PC-3 (cell line): ENCODE measurements at regions of chr10 and their contacts with region 1.

Region 1: DNA sequence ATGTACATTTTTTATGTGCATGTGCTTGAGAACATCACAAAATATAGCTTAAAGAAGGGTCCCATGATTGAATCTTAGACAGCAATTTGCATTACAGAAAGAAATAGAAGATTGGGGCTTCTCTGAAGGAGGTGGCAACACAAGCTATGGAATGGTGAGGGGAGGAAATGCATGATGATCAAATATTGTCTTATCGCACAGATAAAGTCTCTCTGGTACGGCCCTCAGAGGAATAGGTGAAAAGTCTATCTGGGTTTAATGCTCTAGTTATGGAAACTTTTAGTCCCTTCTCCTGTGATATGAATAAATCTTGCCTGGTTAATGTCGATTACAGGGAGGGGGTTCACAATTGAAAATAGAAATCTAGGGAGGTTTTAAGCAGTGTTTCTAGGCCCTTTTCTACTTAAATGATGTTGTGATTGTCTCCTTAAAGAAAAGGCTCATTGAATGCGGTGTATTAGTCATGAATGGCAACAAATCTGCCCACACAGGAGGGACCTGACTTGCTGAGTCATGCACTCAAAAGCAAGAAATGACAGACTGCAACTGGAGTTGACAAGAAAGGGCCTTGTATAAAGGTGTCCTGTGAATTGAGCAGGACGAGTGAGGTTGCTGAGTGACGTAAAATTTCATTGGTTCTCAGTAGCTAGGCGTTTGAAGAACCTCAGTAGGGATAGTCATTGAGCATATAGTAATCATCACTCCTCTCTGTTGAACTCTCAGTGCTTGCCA is 133.4 kb upstream of the CSTF2T start:
- DNase-seq: peak; percentile 100
- ATAC-seq: peak; percentile 100
- H3K4me3 ChIP-seq: no peak overlapping the region
- H3K27ac ChIP-seq: peak overlapping the region; percentile 85
- H3K4me1 ChIP-seq: peaks cover 14% of the 10 kb centered on the region
- H3K27me3 ChIP-seq: no peaks in the 10 kb centered on the region
- CTCF ChIP-seq: no peak

Region 2: GRCh38 chr10:51653025-51653424 is 179.8 kb before region 1 on chr10:
- CTCF ChIA-PET with region 1: no interaction called
- POLR2A ChIA-PET with region 1: no interaction called
- intact Hi-C with region 1: no loop called
- DNase-seq: no peak
- ATAC-seq: no peak
- H3K4me3 ChIP-seq: no peak overlapping the region
- H3K27ac ChIP-seq: no peak overlapping the region
- H3K4me1 ChIP-seq: peaks cover 13% of the 10 kb centered on the region
- H3K27me3 ChIP-seq: no peaks in the 10 kb centered on the region
- CTCF ChIP-seq: no peak

Region 3: GRCh38 chr10:51667678-51668335 is 165.0 kb before region 1 on chr10:
- CTCF ChIA-PET with region 1: no interaction called
- POLR2A ChIA-PET with region 1: no interaction called
- intact Hi-C with region 1: no loop called
- DNase-seq: peak; percentile 91
- ATAC-seq: peak; percentile 99
- H3K4me3 ChIP-seq: no peak overlapping the region
- H3K27ac ChIP-seq: no peak overlapping the region
- H3K4me1 ChIP-seq: peaks cover 13% of the 10 kb centered on the region
- H3K27me3 ChIP-seq: no peaks in the 10 kb centered on the region
- CTCF ChIP-seq: no peak

Region 4: DNA sequence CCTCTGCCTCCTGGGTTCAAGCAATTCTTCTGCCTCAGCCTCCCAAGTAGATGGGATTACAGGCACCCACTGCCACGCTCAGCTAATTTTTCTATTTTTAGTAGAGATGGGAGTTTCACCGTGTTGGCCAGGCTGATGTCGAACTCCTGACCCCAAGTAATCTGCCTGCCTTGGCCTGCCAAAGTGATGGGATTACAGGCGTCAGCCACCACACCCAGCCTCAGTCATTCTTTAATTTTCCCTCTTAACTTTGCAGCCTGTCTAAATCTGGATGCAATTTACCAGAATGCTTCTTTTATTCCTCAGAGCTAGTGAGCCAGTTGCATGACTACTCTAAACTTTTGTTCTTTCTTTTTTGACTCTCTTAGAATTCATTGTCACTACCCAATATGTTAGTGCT is 42.9 kb before region 1 on chr10:
- CTCF ChIA-PET with region 1: no interaction called
- POLR2A ChIA-PET with region 1: no interaction called
- intact Hi-C with region 1: no loop called
- DNase-seq: no peak
- ATAC-seq: no peak
- H3K4me3 ChIP-seq: no peak overlapping the region
- H3K27ac ChIP-seq: no peak overlapping the region
- H3K4me1 ChIP-seq: no peaks in the 10 kb centered on the region
- H3K27me3 ChIP-seq: no peaks in the 10 kb centered on the region
- CTCF ChIP-seq: no peak

Region 5: DNA sequence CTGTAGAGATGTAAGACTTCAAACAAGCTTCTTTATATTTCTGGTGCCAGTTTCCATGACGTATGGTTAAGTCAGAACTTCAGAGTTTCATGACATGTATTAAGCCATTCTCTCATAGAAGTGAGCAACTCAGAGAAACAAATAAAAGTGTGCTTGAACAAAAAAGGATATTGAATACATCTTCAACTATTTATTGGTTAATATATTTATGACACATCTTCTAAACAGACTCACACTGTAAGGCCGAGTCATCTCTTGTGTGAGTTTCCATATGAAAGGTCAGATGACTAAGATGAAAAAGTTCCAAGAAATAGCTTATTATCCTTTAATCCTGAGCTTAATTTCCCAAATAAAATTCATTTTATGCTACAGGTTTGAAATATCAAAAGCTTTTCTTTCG is 28.0 kb before region 1 on chr10:
- CTCF ChIA-PET with region 1: no interaction called
- POLR2A ChIA-PET with region 1: no interaction called
- intact Hi-C with region 1: loop called (anchors 1 kb)
- DNase-seq: peak; percentile 96
- ATAC-seq: peak; percentile 89
- H3K4me3 ChIP-seq: no peak overlapping the region
- H3K27ac ChIP-seq: peak overlapping the region; percentile 79
- H3K4me1 ChIP-seq: peaks cover 31% of the 10 kb centered on the region
- H3K27me3 ChIP-seq: no peaks in the 10 kb centered on the region
- CTCF ChIP-seq: no peak

Region 6: DNA sequence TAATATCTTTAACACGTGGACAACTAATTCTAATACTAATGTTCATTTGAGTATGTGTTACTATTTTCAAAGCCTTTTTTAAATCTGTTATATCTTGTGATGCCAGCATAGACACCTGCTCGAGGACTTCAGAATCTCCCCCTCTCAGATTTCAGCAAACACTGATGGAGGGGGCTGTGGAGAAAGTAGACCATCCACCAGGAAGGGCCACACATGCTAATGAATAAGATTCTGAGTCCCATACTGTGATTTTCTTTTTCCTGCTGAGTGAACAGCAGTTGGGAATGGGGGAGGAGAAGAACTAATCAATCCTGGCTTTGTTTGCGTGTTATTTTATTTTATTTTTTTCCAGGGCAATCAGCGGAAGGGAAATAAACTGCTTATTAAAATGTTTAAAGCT is 24.5 kb after region 1 on chr10:
- CTCF ChIA-PET with region 1: no interaction called
- POLR2A ChIA-PET with region 1: no interaction called
- intact Hi-C with region 1: no loop called
- DNase-seq: no peak
- ATAC-seq: no peak
- H3K4me3 ChIP-seq: no peak overlapping the region
- H3K27ac ChIP-seq: no peak overlapping the region
- H3K4me1 ChIP-seq: no peaks in the 10 kb centered on the region
- H3K27me3 ChIP-seq: no peaks in the 10 kb centered on the region
- CTCF ChIP-seq: no peak

Region 7: GRCh38 chr10:51879238-51879637 is 46.4 kb after region 1 on chr10:
- CTCF ChIA-PET with region 1: no interaction called
- POLR2A ChIA-PET with region 1: no interaction called
- intact Hi-C with region 1: loop called (anchors 1 kb)
- DNase-seq: peak; percentile 99
- ATAC-seq: peak; percentile 99
- H3K4me3 ChIP-seq: no peak overlapping the region
- H3K27ac ChIP-seq: peak overlapping the region; percentile 82
- H3K4me1 ChIP-seq: peaks cover 12% of the 10 kb centered on the region
- H3K27me3 ChIP-seq: no peaks in the 10 kb centered on the region
- CTCF ChIP-seq: no peak

Region 8: GRCh38 chr10:52056296-52056695 is 223.5 kb after region 1 on chr10:
- CTCF ChIA-PET with region 1: no interaction called
- POLR2A ChIA-PET with region 1: no interaction called
- intact Hi-C with region 1: loop called (anchors 10 kb)
- DNase-seq: peak; percentile 98
- ATAC-seq: peak; percentile 82
- H3K4me3 ChIP-seq: no peak overlapping the region
- H3K27ac ChIP-seq: no peak overlapping the region
- H3K4me1 ChIP-seq: peaks cover 19% of the 10 kb centered on the region
- H3K27me3 ChIP-seq: no peaks in the 10 kb centered on the region
- CTCF ChIP-seq: no peak